HEK293 (cell line): ENCODE measurements at regions of chr4 and their contacts with region 1.

Region 1: DNA sequence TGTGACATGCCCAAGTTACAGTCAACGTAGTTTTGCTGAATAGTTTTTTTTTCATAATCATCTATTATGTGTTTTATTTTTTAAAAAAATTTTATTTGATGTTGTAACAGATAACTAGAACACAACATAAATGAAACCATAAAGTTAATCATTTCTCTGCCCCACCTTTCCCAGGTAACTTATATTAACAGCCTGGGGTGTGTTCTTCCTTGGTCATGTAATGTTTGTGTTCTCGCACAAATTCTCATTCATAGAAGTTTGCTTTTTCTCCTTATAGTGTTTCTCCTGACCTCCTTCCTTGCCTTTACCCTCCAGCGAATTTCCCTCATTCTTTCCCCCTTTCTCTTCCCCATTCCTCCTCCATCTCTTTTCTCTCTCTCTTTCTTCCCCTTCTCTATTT is 214.8 kb downstream of the SOWAHB start:
- H3K4me3 ChIP-seq: no peak overlapping the region
- H3K27ac ChIP-seq: no peak overlapping the region
- H3K4me1 ChIP-seq: peaks cover 4% of the 10 kb centered on the region
- CTCF ChIP-seq: no peak

Region 2: DNA sequence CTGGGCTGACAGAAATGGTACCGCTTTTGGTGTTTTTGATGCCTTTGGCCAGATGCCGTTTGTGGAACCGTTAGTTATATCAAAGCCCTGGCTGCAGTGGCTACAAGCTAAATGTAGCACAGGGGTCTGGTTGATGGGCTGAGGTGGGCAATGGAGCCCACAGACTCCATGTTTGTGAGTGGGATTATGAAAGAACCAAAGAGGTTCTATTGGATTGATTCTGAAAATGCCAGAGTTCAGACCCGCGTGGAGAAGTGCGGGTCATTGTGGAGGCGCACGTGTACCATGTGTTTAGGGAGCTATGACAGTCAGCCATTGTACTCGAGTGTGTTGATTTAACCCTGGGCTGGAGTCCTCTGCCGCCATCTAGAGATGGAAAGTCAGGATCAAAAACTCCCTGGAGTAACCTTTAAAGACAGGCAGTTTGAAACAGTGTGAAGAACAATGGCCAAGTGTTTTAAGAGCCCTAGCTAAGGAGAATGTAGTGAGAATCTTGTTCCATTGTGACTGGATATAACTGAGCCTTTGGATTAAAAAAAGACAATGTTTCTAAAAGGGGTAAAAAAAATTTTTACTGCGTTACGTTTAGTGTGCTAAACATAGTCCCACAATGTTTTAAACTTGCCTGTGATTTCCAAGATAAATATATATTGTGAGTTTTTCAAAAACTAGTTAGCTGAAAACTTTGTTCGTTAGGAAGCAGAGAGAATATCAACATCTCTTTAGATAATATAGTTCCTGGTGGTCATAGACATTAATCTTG is 596.0 kb before region 1 on chr4:
- CTCF ChIA-PET with region 1: no interaction called
- POLR2A ChIA-PET with region 1: no interaction called
- H3K4me3 ChIP-seq: no peak overlapping the region
- H3K27ac ChIP-seq: no peak overlapping the region
- H3K4me1 ChIP-seq: no peaks in the 10 kb centered on the region
- CTCF ChIP-seq: 0 out of 2 replicates have a peak, but pooled peaks have one; percentile 36

Region 3: GRCh38 chr4:76407440-76408119 is 275.6 kb before region 1 on chr4:
- CTCF ChIA-PET with region 1: no interaction called
- POLR2A ChIA-PET with region 1: no interaction called
- H3K4me3 ChIP-seq: no peak overlapping the region
- H3K27ac ChIP-seq: no peak overlapping the region
- H3K4me1 ChIP-seq: no peaks in the 10 kb centered on the region
- CTCF ChIP-seq: no peak

Region 4: GRCh38 chr4:76634239-76634638 is 48.9 kb before region 1 on chr4:
- CTCF ChIA-PET with region 1: no interaction called
- POLR2A ChIA-PET with region 1: interaction called, 13 read pairs
- H3K4me3 ChIP-seq: no peak overlapping the region
- H3K27ac ChIP-seq: no peak overlapping the region
- H3K4me1 ChIP-seq: no peaks in the 10 kb centered on the region
- CTCF ChIP-seq: no peak

Region 5: GRCh38 chr4:76943129-76943620 is 260.0 kb after region 1 on chr4:
- CTCF ChIA-PET with region 1: no interaction called
- POLR2A ChIA-PET with region 1: no interaction called
- H3K4me3 ChIP-seq: no peak overlapping the region
- H3K27ac ChIP-seq: no peak overlapping the region
- H3K4me1 ChIP-seq: no peaks in the 10 kb centered on the region
- CTCF ChIP-seq: no peak

Region 6: DNA sequence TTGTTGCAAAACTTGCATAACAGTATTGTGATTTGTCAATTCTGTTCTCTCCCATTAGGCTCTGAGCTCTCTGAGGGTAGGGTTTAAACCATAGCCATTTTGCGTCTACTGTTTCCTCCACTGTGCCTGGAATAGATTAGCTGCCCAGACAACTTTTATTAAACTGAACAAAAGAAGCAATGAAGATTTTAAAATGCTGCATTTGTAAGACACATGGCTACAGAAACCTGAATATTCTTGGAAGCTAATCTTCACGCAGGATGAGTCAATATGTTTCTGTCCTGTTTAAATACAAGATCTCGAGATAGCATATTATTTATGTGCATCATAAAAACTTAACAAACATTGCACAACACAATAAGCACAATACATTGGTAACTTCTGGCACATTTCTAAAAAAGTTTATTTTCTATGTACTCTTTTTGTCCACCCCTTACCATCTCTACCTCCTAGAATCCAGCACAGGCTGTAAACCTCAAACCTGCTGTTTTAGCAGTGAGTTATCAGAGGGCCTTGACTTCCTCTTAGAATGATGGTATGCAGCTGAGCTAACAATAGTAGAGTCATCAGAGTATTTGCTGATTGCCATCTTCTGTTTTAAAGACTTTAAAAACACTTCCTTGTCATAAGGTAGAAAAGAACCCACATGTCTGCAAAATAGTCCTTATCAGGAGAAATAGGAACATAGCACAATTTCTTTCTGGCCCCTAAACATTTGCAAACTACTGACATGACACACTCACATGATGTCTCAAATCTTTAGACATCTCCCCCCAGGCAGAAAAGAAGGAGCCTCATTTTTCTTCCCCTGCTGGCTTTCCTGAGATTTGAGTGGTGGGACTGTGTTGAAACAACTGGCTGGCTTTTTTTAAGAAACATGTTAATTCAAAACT is 463.3 kb after region 1 on chr4:
- CTCF ChIA-PET with region 1: no interaction called
- POLR2A ChIA-PET with region 1: no interaction called
- H3K4me3 ChIP-seq: no peak overlapping the region
- H3K27ac ChIP-seq: no peak overlapping the region
- H3K4me1 ChIP-seq: no peaks in the 10 kb centered on the region
- CTCF ChIP-seq: no peak